ENCODE measurements at regions of chr4 and their contacts with region 1.

Region 1: GRCh38 chr4:158722917-158723793 is at the start of gene PPID:
- DNase-seq: peak; percentile 92
- H3K4me3 ChIP-seq: peak within 1 kb of the TSS; percentile 89
- H3K27ac ChIP-seq: peak within 1 kb of the TSS; percentile 92
- H3K4me1 ChIP-seq: no peaks in the 10 kb centered on the region
- H3K27me3 ChIP-seq: no peaks in the 10 kb centered on the region
- CTCF ChIP-seq: no peak
- total RNA-seq, gene PPID: 20.3 to 48.5 TPM

Region 2: DNA sequence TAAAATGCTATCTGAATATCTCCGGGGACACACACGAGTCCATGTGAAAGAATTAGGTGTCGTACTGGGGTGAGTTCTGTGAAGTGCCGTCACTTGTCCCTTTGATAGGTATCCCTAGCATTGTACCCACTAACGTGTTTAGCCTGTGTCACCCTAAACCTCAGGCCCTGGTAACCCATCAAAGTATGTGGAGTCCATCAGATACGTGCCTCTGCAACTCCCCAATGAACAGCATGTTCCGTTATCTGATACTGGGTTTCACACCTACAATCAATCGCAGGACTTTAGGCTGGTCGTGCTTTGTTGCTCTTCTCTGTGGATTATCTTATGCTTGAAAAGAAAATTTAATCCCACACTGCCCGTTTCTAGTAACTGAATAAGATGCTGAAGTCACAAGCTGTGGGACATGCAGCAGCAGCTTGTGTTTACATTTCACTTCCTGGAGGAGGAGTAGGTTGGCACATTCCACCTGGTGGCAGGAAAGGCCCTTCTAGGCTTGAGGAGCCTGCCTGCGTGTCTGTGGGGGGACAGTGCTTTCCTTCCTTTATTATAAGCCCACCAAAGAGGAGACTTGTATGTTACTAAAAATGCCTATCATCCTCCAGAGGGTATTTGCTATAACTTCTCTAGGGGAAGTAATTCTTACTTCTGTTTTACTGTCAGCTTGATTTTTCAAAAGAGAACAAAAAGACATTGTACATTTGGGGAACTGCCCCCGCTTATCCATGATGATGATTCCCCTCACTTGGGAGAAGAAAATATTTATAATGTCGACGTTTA is 172.8 kb after region 1 on chr4:
- intact Hi-C with region 1: no loop called
- DNase-seq: peak; percentile 28
- H3K4me3 ChIP-seq: no peak overlapping the region
- H3K27ac ChIP-seq: no peak overlapping the region
- H3K4me1 ChIP-seq: no peaks in the 10 kb centered on the region
- H3K27me3 ChIP-seq: no peaks in the 10 kb centered on the region
- CTCF ChIP-seq: peak; percentile 12

Region 3: GRCh38 chr4:159048166-159048886 is 325.2 kb after region 1 on chr4:
- intact Hi-C with region 1: no loop called
- DNase-seq: peak; percentile 71
- H3K4me3 ChIP-seq: peak overlapping the region; percentile 11
- H3K27ac ChIP-seq: peak overlapping the region; percentile 40
- H3K4me1 ChIP-seq: no peaks in the 10 kb centered on the region
- H3K27me3 ChIP-seq: no peaks in the 10 kb centered on the region
- CTCF ChIP-seq: no peak

Region 4: DNA sequence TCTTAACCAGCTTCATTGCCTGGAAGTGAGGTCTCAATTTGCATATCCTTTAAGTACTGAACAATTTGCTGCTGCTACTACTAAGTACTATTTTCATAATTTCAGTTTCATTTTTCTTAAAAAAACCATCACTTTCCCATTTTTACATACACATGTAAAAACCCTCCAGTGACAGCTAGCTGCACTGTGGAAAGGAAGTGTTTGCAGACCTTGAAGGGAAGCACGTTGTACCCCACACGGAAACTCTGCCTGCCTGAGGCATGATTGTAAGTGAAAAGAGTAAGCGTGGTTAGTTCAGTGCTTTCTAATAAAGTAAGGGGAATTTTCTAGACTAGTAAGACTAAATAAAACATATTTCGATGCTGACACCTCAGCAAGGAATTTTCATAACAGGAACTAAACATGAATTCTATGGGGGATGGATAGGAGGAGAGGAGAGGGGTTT is 483.3 kb after region 1 on chr4:
- intact Hi-C with region 1: loop called (anchors 10 kb)
- DNase-seq: no peak
- H3K4me3 ChIP-seq: no peak overlapping the region
- H3K27ac ChIP-seq: no peak overlapping the region
- H3K4me1 ChIP-seq: no peaks in the 10 kb centered on the region
- H3K27me3 ChIP-seq: no peaks in the 10 kb centered on the region
- CTCF ChIP-seq: no peak